ENCODE measurements at regions of chr19 and their contacts with region 1.

Region 1: GRCh38 chr19:34972163-34972705 is 8.2 kb upstream of the ZNF792 start:
- DNase-seq: no peak
- H3K4me3 ChIP-seq: no peak overlapping the region
- H3K27ac ChIP-seq: no peak overlapping the region
- H3K4me1 ChIP-seq: peaks cover 0 to 9% (median 4%) of the 10 kb centered on the region in 3 donors
- H3K27me3 ChIP-seq: peaks cover 0 to 8% (median 0%) of the 10 kb centered on the region in 4 donors
- CTCF ChIP-seq: no peak
- POLR2A ChIP-seq: no peak

Region 2: DNA sequence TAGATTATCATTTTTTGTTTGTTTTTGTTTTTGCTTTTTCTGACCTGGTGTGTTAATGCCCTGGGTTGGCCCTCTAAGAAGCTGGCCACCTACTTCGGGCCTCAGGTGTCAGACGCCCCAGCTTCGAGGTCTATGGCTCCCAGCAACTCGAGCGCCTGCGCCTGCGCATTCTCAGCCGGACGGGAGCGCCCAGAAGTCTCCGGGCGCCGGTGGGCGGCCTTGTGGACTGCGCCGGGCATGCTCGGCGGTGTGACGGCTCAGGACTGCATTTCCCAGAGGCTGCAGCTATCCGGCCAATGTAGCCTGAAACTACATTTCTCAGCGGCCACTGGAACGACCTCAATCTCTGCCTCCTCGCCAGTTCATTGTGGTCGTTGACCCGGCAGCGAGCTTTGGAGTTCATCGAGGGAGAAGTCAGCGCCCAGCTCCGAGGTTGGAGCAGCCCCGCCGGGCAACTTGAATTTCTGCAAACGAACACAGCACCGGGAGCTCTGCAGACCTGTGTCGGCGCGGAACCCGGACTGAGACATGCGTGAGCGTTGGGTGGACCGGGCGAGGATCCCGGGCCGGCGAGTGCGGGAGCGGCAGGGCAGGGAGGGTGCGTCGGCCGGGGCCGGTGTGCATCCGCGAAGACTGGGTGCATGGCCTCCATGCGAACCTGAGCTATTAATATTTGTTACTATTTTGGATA is 45.4 kb before region 1 on chr19 and contains the start of gene ZNF30:
- intact Hi-C with region 1: no loop called
- DNase-seq: peak; percentile 16
- H3K4me3 ChIP-seq: peak within 1 kb of the TSS; percentile 60 to 94 (median 65)
- H3K27ac ChIP-seq: peak within 1 kb of the TSS; percentile 62 to 80 (median 78)
- H3K4me1 ChIP-seq: peaks cover 0 to 19% (median 0%) of the 10 kb centered on the region in 3 donors
- H3K27me3 ChIP-seq: no peaks in the 10 kb centered on the region
- CTCF ChIP-seq: peak in 2 of 6 experiments; percentile 5 to 24
- POLR2A ChIP-seq: peak in 3 of 4 donors; percentile 16 to 35 (median 18)
- total RNA-seq, gene ZNF30: 0.26 to 30.2 (median 1.3) TPM

Region 3: DNA sequence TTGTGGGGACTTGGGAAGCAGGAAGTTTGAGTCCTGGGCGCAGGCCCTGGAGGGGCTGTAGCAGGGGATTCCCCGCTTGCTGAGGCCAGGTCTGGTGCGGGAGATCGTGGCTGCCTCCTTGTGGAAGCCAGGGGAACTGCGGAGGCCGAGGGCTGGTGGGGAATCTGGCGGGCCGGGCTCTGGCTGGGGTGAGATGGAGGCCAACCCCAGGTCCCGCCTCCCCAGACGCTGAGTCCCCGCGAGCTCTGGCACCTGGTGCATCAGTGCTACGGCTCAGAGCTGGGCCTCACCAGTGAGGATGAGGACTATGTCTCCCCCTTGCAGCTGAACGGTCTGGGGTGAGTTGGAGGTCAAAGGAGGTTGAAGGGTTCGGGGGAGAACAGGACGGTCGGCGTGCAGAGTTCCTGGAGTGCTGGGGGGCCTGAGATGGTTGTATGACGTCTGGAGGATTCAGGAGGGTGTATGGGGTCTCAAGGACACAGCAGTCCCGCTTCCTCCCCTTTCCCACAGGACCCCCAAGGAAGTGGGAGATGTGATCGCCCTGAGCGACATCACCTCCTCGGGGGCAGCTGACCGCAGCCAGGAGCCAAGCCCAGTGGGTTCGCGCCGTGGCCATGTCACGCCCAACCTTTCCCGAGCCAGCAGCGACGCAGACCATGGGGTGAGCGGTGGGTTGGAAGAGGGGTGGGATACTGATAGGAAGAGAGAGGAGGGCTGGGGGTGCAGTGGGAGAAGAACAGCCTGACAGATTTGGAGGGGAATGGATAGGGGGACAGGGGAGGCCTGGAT is 41.0 kb after region 1 on chr19:
- intact Hi-C with region 1: loop called (anchors 2 kb)
- DNase-seq: no peak
- H3K4me3 ChIP-seq: no peak overlapping the region
- H3K27ac ChIP-seq: peak overlapping the region in 3 of 4 donors; percentile 23 to 51 (median 30)
- H3K4me1 ChIP-seq: peaks cover 17 to 55% (median 24%) of the 10 kb centered on the region in 3 donors
- H3K27me3 ChIP-seq: no peaks in the 10 kb centered on the region
- CTCF ChIP-seq: peak; percentile 94 to 98 (median 95)
- POLR2A ChIP-seq: no peak

Region 4: GRCh38 chr19:35027851-35028599 is 55.8 kb after region 1 on chr19:
- intact Hi-C with region 1: no loop called
- DNase-seq: no peak
- H3K4me3 ChIP-seq: no peak overlapping the region
- H3K27ac ChIP-seq: no peak overlapping the region
- H3K4me1 ChIP-seq: peaks cover 6 to 29% (median 16%) of the 10 kb centered on the region in 3 donors
- H3K27me3 ChIP-seq: peaks cover 0 to 35% (median 0%) of the 10 kb centered on the region in 4 donors
- CTCF ChIP-seq: no peak
- POLR2A ChIP-seq: no peak

Measured in esophagus squamous epithelium (tissue), 5 donors.